ENCODE measurements at regions of chr3 and their contacts with region 1.

Region 1: GRCh38 chr3:123652346-123652984 is 67.6 kb upstream of the HACD2 start:
- DNase-seq: peak; percentile 69 to 85
- ATAC-seq: peak; percentile 84

Region 2: GRCh38 chr3:123301331-123302184 is 350.9 kb before region 1 on chr3:
- intact Hi-C with region 1: no loop called
- DNase-seq: no peak
- ATAC-seq: peak; percentile 20

Region 3: DNA sequence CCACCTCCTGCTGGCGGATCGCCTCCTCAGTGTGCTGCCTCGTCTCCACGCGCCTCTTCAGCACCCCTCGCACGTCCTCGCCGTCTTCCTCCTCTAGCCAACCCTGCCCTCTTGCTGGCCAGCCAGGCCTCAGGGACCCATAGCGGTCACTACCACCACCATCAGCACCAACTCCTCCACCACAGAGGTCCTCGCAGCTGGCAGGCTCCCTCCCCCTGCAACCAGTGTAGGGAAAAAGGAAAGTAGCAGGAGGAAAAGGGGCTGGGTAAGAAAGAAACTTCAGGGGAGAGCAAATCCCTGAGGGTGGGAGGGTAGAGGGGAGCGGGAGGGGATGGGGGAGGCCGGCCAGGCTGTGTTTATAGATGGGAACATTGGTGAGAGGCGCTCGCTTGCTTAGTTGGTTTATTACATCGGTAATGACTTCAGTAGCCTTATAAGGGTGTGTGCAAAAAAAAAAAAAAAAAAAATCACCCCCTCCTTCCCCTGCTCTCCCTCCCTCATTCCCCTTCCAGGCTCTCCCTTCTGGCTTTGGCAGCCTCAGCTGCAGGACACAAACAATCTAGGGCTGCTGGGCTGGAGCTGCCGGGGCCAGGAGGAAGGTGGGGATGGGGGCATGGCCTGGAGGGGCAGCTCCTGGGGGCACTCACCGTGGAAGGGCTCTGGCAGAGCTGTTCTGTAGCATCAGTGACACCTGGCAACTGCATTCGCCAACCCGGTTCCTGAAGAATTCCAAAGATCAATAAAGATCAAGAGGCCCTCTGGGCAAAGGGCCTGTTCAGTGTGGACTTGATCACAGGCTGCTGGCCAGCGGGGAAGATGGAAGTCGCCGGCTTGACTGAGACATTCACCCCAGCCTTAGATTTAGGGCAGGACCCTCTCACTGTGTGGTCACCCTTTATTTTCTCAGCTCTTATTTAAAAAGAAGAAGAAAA is 48.6 kb after region 1 on chr3:
- intact Hi-C with region 1: loop called in 1 of 2 experiments (anchors 5 kb)
- DNase-seq: peak; percentile 23 to 74
- ATAC-seq: peak; percentile 38

Region 4: GRCh38 chr3:123723522-123724168 is 71.2 kb after region 1 on chr3:
- intact Hi-C with region 1: loop called (anchors 5 to 10 kb)
- DNase-seq: peak in 1 of 2 donors; percentile 56
- ATAC-seq: peak; percentile 71